ENCODE measurements at regions of chr11 and their contacts with region 1.

Region 1: GRCh38 chr11:113773416-113774173 is at the start of gene ZW10:
- DNase-seq: peak; percentile 96
- H3K4me3 Mint-ChIP-seq: peak within 1 kb of the TSS; percentile 95
- H3K27ac Mint-ChIP-seq: peak within 1 kb of the TSS; percentile 93
- H3K4me1 Mint-ChIP-seq: peaks cover 14% of the 10 kb centered on the region
- H3K27me3 Mint-ChIP-seq: no peaks in the 10 kb centered on the region
- total RNA-seq, gene ZW10: 14.6 to 15.2 TPM

Region 2: GRCh38 chr11:113314389-113315301 is 458.9 kb before region 1 on chr11 and contains the start of gene TTC12:
- CTCF ChIA-PET with region 1: interaction called, 8 read pairs
- POLR2A ChIA-PET with region 1: no interaction called
- intact Hi-C with region 1: loop called (anchors 1 kb)
- DNase-seq: peak; percentile 96
- H3K4me3 Mint-ChIP-seq: peak within 1 kb of the TSS; percentile 83
- H3K27ac Mint-ChIP-seq: peak within 1 kb of the TSS; percentile 77
- H3K4me1 Mint-ChIP-seq: peaks cover 23% of the 10 kb centered on the region
- H3K27me3 Mint-ChIP-seq: no peaks in the 10 kb centered on the region
- total RNA-seq, gene TTC12: 7.4 to 8.9 TPM

Region 3: DNA sequence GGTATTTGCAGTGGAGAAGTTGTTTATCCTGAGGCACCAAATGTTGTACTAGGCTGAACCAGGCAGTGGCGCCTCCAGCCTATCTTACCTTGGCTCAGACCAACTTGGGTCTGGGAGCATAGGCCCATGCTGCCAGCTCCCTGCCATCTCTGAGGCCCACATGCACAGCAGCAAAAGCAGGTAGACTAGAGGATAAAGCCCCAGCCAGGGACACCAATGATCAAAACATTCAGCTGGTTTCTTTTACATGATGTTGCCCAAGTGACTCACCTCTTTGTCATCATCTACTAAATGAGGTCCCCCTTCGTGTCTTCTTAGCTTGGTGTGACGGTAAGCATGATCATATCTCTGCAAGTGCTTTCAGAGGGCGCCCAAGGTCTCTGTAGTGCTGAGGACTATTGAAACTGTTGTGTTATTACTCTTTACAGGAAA is 186.3 kb before region 1 on chr11:
- CTCF ChIA-PET with region 1: interaction called, 3 read pairs
- POLR2A ChIA-PET with region 1: no interaction called
- intact Hi-C with region 1: loop called (anchors 5 kb)
- DNase-seq: peak; percentile 73
- H3K4me3 Mint-ChIP-seq: no peak overlapping the region
- H3K27ac Mint-ChIP-seq: peak overlapping the region; percentile 76
- H3K4me1 Mint-ChIP-seq: peaks cover 16% of the 10 kb centered on the region
- H3K27me3 Mint-ChIP-seq: peaks cover 12% of the 10 kb centered on the region

Region 4: GRCh38 chr11:113725407-113725806 is 48.2 kb before region 1 on chr11:
- CTCF ChIA-PET with region 1: no interaction called
- POLR2A ChIA-PET with region 1: no interaction called
- intact Hi-C with region 1: no loop called
- DNase-seq: no peak
- H3K4me3 Mint-ChIP-seq: no peak overlapping the region
- H3K27ac Mint-ChIP-seq: no peak overlapping the region
- H3K4me1 Mint-ChIP-seq: no peaks in the 10 kb centered on the region
- H3K27me3 Mint-ChIP-seq: no peaks in the 10 kb centered on the region

Region 5: DNA sequence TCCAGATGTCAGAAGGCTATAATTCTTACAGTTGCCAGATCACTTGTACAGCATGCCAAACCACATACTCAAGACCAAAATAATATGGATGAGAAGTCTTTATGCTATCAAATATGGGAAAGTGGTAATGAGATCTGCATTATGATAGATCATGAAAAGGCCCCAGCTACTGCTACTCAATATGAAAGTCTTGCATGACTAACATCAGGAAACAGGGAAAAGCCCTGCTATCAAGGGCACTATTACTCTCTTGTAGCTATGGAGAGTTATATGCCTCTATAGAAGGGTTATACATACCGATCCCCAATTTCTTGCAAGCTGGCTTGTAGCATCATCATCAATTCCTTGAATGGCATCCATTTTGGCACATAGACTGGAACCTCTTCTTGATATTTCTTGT is 37.3 kb before region 1 on chr11:
- CTCF ChIA-PET with region 1: no interaction called
- POLR2A ChIA-PET with region 1: no interaction called
- intact Hi-C with region 1: loop called (anchors 1 kb)
- DNase-seq: no peak
- H3K4me3 Mint-ChIP-seq: no peak overlapping the region
- H3K27ac Mint-ChIP-seq: no peak overlapping the region
- H3K4me1 Mint-ChIP-seq: peaks cover 9% of the 10 kb centered on the region
- H3K27me3 Mint-ChIP-seq: no peaks in the 10 kb centered on the region

Region 6: DNA sequence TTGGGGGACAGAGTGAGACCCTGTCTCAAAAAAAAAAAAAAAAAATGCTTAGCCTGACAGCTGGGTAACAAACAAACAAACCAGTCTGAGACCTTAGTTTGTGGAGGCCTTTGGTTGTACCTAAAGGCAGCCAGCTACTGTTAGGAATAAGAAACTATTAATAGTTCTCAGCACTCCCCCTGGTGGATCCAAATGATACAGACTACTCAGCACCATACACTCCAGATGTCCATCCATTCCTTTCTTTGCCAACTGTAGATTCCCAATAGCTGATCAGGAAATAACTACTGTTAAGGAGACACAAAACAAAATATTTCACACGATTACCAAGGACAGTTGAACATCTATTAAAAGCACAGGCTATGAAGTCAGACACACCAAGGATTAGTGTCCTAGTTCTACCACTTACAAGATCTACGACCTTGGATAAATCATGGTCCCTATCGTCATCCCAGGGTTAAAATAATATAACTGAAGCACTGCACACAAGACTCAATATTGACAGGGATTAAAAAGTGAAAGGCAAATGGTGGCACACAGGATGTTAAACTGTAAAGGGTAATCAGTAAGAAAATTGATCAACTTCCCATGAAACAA is 23.2 kb after region 1 on chr11:
- CTCF ChIA-PET with region 1: interaction called, 3 read pairs
- POLR2A ChIA-PET with region 1: no interaction called
- intact Hi-C with region 1: loop called (anchors 2 kb)
- DNase-seq: no peak
- H3K4me3 Mint-ChIP-seq: no peak overlapping the region
- H3K27ac Mint-ChIP-seq: no peak overlapping the region
- H3K4me1 Mint-ChIP-seq: no peaks in the 10 kb centered on the region
- H3K27me3 Mint-ChIP-seq: no peaks in the 10 kb centered on the region

Region 7: DNA sequence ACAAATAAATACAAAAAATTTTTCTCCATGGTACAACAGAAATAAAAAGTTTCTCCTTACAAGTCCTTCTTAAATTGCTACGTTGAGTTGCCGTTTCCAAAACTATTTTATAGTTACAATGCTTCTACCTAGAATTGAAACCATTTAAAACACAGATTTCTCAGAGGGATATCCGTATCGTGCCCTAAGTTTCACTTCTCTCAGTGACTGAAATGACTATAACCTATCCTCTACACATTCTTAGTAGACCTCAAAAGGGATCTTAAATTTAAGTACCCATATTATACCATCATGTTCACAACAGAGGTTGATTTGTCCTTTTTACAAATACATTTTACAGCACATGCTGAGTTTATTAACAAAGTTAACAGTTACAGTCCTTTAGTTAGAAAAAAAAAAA is 57.7 kb after region 1 on chr11:
- CTCF ChIA-PET with region 1: no interaction called
- POLR2A ChIA-PET with region 1: no interaction called
- intact Hi-C with region 1: no loop called
- DNase-seq: no peak
- H3K4me3 Mint-ChIP-seq: no peak overlapping the region
- H3K27ac Mint-ChIP-seq: no peak overlapping the region
- H3K4me1 Mint-ChIP-seq: no peaks in the 10 kb centered on the region
- H3K27me3 Mint-ChIP-seq: no peaks in the 10 kb centered on the region

Region 8: DNA sequence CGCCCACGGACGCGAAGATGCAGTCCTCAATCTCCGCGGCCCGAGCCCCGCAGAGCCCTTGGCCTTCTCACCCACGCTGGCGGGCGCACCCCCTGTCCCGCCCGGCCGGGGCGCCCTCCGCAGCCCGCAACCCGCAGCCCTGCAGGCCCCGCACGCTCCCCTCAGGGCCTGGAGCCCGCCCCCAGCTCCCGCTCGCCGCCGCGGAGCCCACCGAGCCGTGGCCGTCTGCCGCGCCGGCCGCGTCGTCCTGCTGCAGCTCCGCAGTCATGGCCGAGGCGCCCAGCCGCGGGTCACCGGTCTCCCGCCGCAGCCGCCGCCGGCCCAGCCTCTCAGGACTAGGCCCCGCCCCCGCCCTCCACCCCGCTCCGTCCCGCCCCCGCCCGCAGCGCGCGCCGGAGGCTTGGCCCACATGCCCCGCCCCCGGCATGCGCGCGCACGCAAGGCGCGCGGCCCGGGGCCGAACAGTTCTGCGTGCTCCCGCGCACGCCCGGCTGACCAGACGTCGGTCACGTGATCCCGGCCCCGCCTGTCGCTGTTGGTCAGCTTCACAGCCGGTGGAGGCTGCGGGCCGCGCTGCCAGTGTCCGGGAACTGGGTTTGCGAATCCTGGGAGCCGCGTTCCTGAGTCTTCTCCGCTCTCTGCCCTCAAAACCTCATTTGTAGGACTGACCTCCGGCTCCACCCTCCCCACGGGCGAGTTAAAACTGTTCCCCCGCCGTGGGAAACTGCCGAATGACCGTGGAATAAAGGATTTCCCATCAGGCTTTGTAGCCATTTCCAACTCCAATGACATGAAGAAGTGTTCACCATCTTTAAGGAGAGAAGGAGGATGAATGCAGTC is 101.9 kb after region 1 on chr11 and contains the start of gene USP28:
- CTCF ChIA-PET with region 1: no interaction called
- POLR2A ChIA-PET with region 1: no interaction called
- intact Hi-C with region 1: loop called (anchors 1 kb)
- DNase-seq: peak; percentile 87
- H3K4me3 Mint-ChIP-seq: peak within 1 kb of the TSS; percentile 94
- H3K27ac Mint-ChIP-seq: peak within 1 kb of the TSS; percentile 84
- H3K4me1 Mint-ChIP-seq: peaks cover 32% of the 10 kb centered on the region
- H3K27me3 Mint-ChIP-seq: no peaks in the 10 kb centered on the region
- total RNA-seq, gene USP28: 30.6 to 41.7 TPM

Region 9: GRCh38 chr11:114400217-114400914 is 626.8 kb after region 1 on chr11 and contains the starts of genes C11orf71 and RBM7:
- CTCF ChIA-PET with region 1: no interaction called
- POLR2A ChIA-PET with region 1: interaction called, 4 read pairs
- intact Hi-C with region 1: loop called (anchors 1 kb)
- DNase-seq: peak; percentile 98
- H3K4me3 Mint-ChIP-seq: peak within 1 kb of the TSS; percentile 97
- H3K27ac Mint-ChIP-seq: peak within 1 kb of the TSS; percentile 99
- H3K4me1 Mint-ChIP-seq: peaks cover 48% of the 10 kb centered on the region
- H3K27me3 Mint-ChIP-seq: no peaks in the 10 kb centered on the region
- total RNA-seq, gene C11orf71: 5.0 to 5.5 TPM
- total RNA-seq, gene RBM7: 44.0 to 45.4 TPM

Measured in activated CD4-positive, alpha-beta memory T cell treated with anti-CD3 and anti-CD28 coated beads for 36 hours (primary cell).